T-cell (primary cell): ENCODE measurements at regions of chr11 and their contacts with region 1.

Region 1: GRCh38 chr11:108222686-108223448 is at the start of gene ATM:
- DNase-seq: peak; percentile 95 to 100 (median 99)
- ATAC-seq: peak; percentile 79 to 85 (median 80)
- H3K4me3 ChIP-seq: peak within 1 kb of the TSS; percentile 95 to 96
- H3K4me3 Mint-ChIP-seq: no peak within 1 kb of the TSS
- H3K27ac ChIP-seq: peak within 1 kb of the TSS; percentile 98
- H3K27ac Mint-ChIP-seq: no peak within 1 kb of the TSS
- H3K4me1 ChIP-seq: peaks cover 21 to 45% of the 10 kb centered on the region in 2 experiments
- H3K4me1 Mint-ChIP-seq: peaks cover 47 to 62% (median 50%) of the 10 kb centered on the region in 3 donors
- H3K27me3 ChIP-seq: no peaks in the 10 kb centered on the region
- H3K27me3 Mint-ChIP-seq: no peaks in the 10 kb centered on the region
- total RNA-seq, gene ATM: 376 to 547 (median 410) TPM

Region 2: DNA sequence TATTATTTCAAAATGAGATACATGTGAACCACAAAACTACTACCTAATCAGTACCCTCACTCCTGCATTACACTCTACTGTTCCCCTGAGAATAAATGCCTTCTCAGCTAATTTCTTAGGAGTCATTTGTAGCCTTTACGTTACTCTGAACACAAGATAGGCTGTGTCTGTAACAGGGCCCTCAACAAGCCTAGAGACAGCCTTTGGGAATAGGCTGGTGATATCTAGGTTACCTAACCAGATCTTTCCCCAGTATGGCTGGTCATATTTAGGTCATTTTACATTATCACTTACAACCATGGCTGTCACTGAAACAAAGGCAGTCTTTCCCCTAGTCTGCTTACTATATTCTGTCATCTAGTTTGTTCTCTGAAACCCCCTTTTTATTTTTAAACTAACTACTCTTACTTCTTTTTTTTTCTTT is 14.2 kb after region 1 on chr11:
- CTCF ChIA-PET with region 1: interaction called, 5 to 41 read pairs
- POLR2A ChIA-PET with region 1: interaction called, 7 to 107 read pairs
- DNase-seq: peak in 3 of 35 experiments; percentile 18 to 64 (median 25)
- ATAC-seq: peak; percentile 12 to 55 (median 21)
- H3K4me3 ChIP-seq: peak overlapping the region in 1 of 2 donors; percentile 20
- H3K4me3 Mint-ChIP-seq: peak overlapping the region; percentile 61 to 71 (median 67)
- H3K27ac ChIP-seq: peak overlapping the region; percentile 86
- H3K27ac Mint-ChIP-seq: peak overlapping the region; percentile 91 to 93
- H3K4me1 ChIP-seq: peaks cover 64 to 86% of the 10 kb centered on the region in 2 experiments
- H3K4me1 Mint-ChIP-seq: peaks cover 79 to 92% (median 83%) of the 10 kb centered on the region in 3 donors
- H3K27me3 ChIP-seq: no peaks in the 10 kb centered on the region
- H3K27me3 Mint-ChIP-seq: no peaks in the 10 kb centered on the region

Region 3: GRCh38 chr11:108253176-108253575 is 30.3 kb after region 1 on chr11:
- CTCF ChIA-PET with region 1: interaction called, 3 to 25 read pairs
- POLR2A ChIA-PET with region 1: interaction called in 1 of 2 experiments, 7 read pairs
- DNase-seq: peak in 1 of 35 experiments; percentile 28
- ATAC-seq: peak in 3 of 4 experiments; percentile 36 to 40 (median 40)
- H3K4me3 ChIP-seq: no peak overlapping the region
- H3K4me3 Mint-ChIP-seq: no peak overlapping the region
- H3K27ac ChIP-seq: peak overlapping the region; percentile 18
- H3K27ac Mint-ChIP-seq: peak overlapping the region; percentile 66 to 76
- H3K4me1 ChIP-seq: peaks cover 4 to 8% of the 10 kb centered on the region in 2 experiments
- H3K4me1 Mint-ChIP-seq: peaks cover 52 to 67% (median 59%) of the 10 kb centered on the region in 3 donors
- H3K27me3 ChIP-seq: no peaks in the 10 kb centered on the region
- H3K27me3 Mint-ChIP-seq: no peaks in the 10 kb centered on the region

Region 4: DNA sequence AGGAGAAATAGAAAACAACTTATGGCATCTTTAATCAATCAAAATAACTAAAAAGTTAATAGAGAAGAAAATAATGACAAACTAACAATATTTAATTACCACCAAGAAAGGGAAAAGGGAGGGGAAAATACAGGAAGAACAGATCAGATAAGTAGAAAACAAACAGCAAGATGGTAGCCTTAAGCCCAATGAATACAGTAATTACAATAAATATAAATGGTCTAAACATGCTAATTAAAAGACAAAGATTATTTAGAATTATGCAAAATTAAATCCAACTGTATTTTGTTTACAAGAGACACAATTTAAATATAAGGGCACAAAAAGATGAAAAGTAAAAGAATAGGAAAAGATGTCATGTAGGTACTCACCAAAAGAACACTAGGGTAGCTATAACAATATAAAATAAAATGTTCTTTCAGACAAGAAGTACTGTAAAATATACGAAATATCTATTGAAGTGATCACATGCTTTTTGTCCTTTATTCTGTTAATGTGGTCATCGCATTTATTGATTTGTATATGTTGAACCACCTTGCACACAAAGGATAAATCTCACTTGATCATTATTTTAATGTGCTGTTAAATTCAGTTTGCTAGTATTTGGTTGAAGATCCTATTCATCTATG is 230.5 kb after region 1 on chr11:
- CTCF ChIA-PET with region 1: no interaction called
- POLR2A ChIA-PET with region 1: no interaction called
- DNase-seq: no peak
- ATAC-seq: no peak
- H3K4me3 ChIP-seq: no peak overlapping the region
- H3K4me3 Mint-ChIP-seq: no peak overlapping the region
- H3K27ac ChIP-seq: no peak overlapping the region
- H3K27ac Mint-ChIP-seq: no peak overlapping the region
- H3K4me1 ChIP-seq: no peaks in the 10 kb centered on the region
- H3K4me1 Mint-ChIP-seq: no peaks in the 10 kb centered on the region
- H3K27me3 ChIP-seq: no peaks in the 10 kb centered on the region
- H3K27me3 Mint-ChIP-seq: no peaks in the 10 kb centered on the region

Region 5: GRCh38 chr11:108887436-108888238 is 664.8 kb after region 1 on chr11:
- CTCF ChIA-PET with region 1: no interaction called
- POLR2A ChIA-PET with region 1: no interaction called
- DNase-seq: peak in 8 of 35 experiments; percentile 1 to 27 (median 8)
- ATAC-seq: peak in 2 of 4 experiments; percentile 53 to 78
- H3K4me3 ChIP-seq: peak overlapping the region in 1 of 2 donors; percentile 19
- H3K4me3 Mint-ChIP-seq: peak overlapping the region in 1 of 3 donors; percentile 25
- H3K27ac ChIP-seq: no peak overlapping the region
- H3K27ac Mint-ChIP-seq: no peak overlapping the region
- H3K4me1 ChIP-seq: peaks cover 3 to 7% of the 10 kb centered on the region in 2 experiments
- H3K4me1 Mint-ChIP-seq: peaks cover 0 to 16% (median 12%) of the 10 kb centered on the region in 3 donors
- H3K27me3 ChIP-seq: no peaks in the 10 kb centered on the region
- H3K27me3 Mint-ChIP-seq: no peaks in the 10 kb centered on the region